Right ventricle myocardium inferior (tissue), 1 donor: ENCODE measurements at regions of chr5 and their contacts with region 1.

Region 1: DNA sequence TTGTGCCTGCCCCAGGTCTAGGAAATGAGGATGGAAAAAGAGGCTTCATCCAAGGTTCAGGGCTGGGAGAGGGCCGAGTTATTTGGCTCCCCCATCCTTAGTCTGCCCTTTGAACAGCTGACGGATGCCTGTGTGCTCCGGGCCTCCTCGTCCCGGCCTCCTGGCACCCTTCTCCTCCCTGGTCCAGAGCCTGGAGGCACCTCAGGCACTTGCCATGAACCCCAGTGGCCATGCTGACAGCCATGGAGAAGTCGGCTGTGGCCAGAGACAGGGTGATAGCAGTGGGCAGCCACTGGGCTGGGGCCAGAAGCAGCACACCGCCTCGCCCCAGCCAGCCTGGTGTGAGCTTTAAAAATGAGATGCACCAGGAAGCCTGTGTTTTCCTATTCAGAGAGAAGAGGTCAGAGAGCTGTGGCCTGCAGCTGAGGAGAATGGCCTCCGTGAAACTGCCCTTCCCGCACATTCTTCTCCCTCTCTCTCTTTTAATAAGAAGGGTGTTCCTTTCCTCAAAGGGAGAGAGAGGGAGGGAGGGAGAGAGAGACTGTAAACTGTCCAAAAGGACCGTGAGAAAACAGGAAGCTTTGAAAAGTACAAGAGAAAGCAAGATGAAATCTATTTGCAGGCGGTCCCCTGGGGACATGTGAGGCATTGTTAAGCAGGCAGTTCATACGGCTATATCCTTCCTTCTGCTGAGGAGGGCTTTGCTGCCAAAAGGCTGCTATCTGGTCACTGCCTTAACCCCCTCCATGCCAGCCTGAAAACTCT is 55.3 kb downstream of the ZNF366 start:
- DNase-seq: peak; percentile 76
- ATAC-seq: peak; percentile 85

Region 2: GRCh38 chr5:72366324-72366976 is 85.5 kb before region 1 on chr5:
- intact Hi-C with region 1: loop called (anchors 5 kb)
- DNase-seq: no peak
- ATAC-seq: peak; percentile 90

Region 3: DNA sequence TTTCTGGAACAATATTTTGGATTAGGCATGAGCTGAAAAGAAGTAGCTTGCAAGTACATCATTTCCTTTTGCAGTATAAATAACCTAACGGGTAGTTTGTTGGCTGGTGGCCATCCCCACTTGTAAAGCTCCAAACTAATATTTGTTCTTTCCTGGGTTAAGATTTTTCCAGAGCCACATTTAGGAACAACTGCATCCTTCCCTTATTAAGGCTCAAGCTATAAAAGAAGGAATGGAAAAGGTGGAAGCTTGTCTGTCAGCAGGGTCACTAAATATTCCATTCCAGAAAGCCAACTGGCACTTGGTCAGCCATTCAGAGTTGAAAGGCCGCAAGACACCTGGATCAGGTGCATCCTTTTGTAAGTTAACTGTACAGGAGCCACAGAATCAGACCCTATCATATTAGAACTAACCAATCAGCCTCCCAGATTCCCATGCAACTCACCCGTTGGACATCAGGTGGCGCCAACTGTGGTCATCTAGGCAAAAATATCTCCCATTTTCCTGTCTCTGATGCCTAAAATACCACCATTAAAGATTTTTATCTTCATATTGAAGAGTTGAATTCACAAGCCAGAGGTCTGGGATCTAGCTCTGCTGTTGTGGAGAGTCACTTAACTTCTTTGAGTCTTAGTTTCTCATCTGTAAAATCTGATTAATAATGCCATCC is 48.8 kb before region 1 on chr5:
- intact Hi-C with region 1: loop called (anchors 10 kb)
- DNase-seq: no peak
- ATAC-seq: no peak

Region 4: DNA sequence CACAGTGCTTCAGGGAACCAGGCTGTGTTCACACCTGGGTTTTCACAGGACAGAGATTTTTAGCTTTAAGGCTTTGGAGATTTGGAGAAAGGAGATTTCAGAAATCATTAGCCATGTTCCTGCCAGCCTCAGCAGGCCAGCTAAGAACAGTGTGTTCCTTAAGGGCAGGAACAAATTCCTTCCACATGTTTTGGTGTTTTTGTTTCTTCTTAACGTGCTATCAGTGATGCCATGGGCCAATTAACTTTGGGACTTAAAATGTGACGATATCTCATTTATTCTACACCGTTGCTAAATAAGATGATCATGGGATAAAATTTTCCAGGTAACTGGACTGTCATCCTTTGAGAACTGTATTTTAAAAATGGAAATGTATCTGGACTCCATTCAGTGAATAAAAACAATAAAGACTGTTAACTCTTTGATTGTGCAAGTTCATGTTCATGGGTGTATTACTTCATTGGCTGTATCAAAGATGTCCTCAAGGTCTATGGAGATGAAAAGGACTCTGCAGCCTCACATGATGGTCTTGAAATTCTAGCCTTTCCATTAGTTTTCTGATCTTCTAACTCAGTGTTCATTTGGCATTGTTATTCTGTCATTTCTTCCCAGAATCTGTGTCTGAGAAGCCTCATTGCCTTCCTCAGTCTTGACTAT is 17.0 kb before region 1 on chr5:
- intact Hi-C with region 1: loop called (anchors 1 kb)
- DNase-seq: no peak
- ATAC-seq: peak; percentile 80

Region 5: DNA sequence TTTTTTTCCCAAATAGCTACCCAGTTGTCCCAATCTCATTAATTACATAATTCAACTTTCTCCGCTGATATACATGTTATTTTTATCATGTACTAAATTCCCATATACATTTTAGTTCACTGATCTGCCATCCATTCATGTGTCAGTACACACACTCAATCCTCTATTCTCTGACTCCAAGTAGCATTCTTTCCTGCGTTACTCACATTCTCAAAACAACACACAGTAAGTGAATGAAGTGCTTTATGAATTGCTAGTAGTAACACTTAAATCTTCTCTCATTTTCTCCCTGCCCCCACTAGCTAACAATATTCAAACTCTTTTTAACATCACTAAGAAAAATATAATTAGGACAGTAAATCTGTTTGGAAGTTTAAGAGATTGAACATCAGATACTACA is 46.4 kb after region 1 on chr5:
- intact Hi-C with region 1: loop called (anchors 2 kb)
- DNase-seq: no peak
- ATAC-seq: no peak

Region 6: GRCh38 chr5:72507909-72508575 is 56.1 kb after region 1 on chr5:
- intact Hi-C with region 1: loop called (anchors 2 kb)
- DNase-seq: no peak
- ATAC-seq: no peak

Region 7: DNA sequence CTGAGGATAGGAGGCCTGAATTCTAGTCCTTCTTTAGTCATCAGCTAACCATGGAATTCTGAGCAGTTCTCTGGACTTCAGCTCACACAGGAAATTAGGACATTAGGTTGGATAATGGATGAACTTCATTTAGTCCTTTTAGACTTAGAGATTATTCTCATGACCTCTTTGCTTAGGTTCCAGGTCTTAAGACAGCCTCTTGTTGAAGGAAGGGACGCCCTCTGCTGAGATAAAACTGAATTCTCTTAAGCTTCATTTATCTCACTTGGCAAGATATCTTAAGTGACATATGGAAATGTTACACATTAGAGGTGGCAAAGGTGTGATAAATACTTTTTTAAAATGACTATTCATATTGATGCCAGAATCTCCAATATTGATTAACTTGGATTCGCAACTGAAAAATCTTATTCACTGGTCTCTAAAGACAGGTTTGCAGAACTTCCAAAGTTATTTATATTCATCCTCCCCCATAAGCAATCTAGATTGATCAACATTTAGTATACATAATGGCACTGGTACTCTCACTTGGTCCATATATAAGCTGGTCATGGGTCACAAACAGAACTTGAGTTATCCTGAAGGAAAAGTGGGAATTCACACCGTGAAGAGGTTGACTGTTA is 72.1 kb after region 1 on chr5:
- intact Hi-C with region 1: loop called (anchors 1 kb)
- DNase-seq: no peak
- ATAC-seq: peak; percentile 79